ENCODE measurements at regions of chr5 and their contacts with region 1.

Region 1: GRCh38 chr5:170225326-170226128 is 7.3 kb upstream of the C5orf58 start:
- DNase-seq: peak; percentile 91
- ATAC-seq: peak; percentile 80
- H3K4me3 Mint-ChIP-seq: no peak overlapping the region
- H3K27ac Mint-ChIP-seq: no peak overlapping the region
- H3K4me1 Mint-ChIP-seq: peaks cover 5% of the 10 kb centered on the region
- H3K27me3 Mint-ChIP-seq: no peaks in the 10 kb centered on the region
- CTCF ChIP-seq: peak; percentile 74

Region 2: DNA sequence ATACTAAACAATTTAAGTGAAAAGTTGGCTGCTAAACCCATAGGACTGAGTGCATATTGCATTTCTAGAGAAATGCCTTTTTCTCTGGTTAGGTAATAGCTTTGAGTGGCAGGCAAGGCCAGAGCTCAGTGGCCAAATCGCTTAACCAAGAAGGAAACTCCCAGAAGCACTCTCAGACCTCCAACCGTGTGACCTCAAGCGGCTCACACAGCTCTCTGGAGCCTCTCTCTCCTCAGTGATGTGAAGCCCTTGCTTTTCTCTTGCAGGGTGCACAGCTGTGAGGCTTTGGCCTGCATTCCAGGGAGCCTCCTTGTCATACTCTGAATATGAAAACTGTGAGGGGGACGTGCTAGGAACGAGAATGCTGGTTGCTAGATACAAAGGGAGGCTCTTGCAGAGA is 351.9 kb before region 1 on chr5:
- CTCF ChIA-PET with region 1: no interaction called
- POLR2A ChIA-PET with region 1: no interaction called
- intact Hi-C with region 1: no loop called
- DNase-seq: no peak
- ATAC-seq: no peak
- H3K4me3 Mint-ChIP-seq: no peak overlapping the region
- H3K27ac Mint-ChIP-seq: no peak overlapping the region
- H3K4me1 Mint-ChIP-seq: peaks cover 8% of the 10 kb centered on the region
- H3K27me3 Mint-ChIP-seq: no peaks in the 10 kb centered on the region
- CTCF ChIP-seq: no peak

Region 3: GRCh38 chr5:170067152-170067551 is 158.4 kb before region 1 on chr5:
- CTCF ChIA-PET with region 1: no interaction called
- POLR2A ChIA-PET with region 1: no interaction called
- intact Hi-C with region 1: no loop called
- DNase-seq: no peak
- ATAC-seq: no peak
- H3K4me3 Mint-ChIP-seq: no peak overlapping the region
- H3K27ac Mint-ChIP-seq: peak overlapping the region; percentile 27
- H3K4me1 Mint-ChIP-seq: peaks cover 2% of the 10 kb centered on the region
- H3K27me3 Mint-ChIP-seq: no peaks in the 10 kb centered on the region
- CTCF ChIP-seq: no peak

Region 4: DNA sequence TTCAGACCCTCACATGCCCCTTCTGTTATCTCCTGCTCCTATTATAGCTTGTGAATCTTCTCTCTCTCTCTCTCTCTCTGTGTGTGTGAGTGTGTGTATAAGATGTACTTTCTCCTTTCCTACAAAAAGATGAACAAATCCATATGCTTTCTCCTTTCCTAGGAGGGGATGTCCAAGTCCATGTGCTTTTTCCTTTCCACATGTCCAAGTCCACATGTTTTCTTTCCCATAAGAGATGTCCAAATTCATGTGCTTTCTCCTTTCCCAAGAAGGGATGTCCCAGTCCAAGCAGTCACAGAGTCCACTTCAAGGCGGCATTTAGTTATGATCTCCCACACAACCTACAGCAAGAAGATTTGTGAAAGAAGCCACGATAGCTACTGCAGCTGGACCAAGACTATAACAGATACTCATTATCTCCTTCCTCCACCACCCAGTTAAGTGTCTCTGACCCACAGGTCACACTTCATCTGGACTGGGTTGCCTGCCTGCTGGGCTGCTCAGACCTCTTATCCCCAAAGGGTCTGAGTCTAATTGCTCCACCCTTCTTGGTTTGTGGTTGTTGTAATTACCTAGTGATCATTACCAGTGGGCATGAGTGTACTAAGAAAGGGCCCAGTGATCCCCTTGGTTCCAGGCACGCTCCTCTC is 138.2 kb before region 1 on chr5:
- CTCF ChIA-PET with region 1: no interaction called
- POLR2A ChIA-PET with region 1: no interaction called
- intact Hi-C with region 1: no loop called
- DNase-seq: no peak
- ATAC-seq: no peak
- H3K4me3 Mint-ChIP-seq: no peak overlapping the region
- H3K27ac Mint-ChIP-seq: no peak overlapping the region
- H3K4me1 Mint-ChIP-seq: no peaks in the 10 kb centered on the region
- H3K27me3 Mint-ChIP-seq: no peaks in the 10 kb centered on the region
- CTCF ChIP-seq: no peak

Region 5: GRCh38 chr5:170100066-170100943 is 125.2 kb before region 1 on chr5:
- CTCF ChIA-PET with region 1: interaction called, 11 read pairs
- POLR2A ChIA-PET with region 1: no interaction called
- intact Hi-C with region 1: no loop called
- DNase-seq: peak; percentile 91
- ATAC-seq: peak; percentile 77
- H3K4me3 Mint-ChIP-seq: no peak overlapping the region
- H3K27ac Mint-ChIP-seq: no peak overlapping the region
- H3K4me1 Mint-ChIP-seq: no peaks in the 10 kb centered on the region
- H3K27me3 Mint-ChIP-seq: no peaks in the 10 kb centered on the region
- CTCF ChIP-seq: peak; percentile 82

Region 6: GRCh38 chr5:170111088-170111785 is 114.3 kb before region 1 on chr5:
- CTCF ChIA-PET with region 1: no interaction called
- POLR2A ChIA-PET with region 1: no interaction called
- intact Hi-C with region 1: no loop called
- DNase-seq: no peak
- ATAC-seq: no peak
- H3K4me3 Mint-ChIP-seq: no peak overlapping the region
- H3K27ac Mint-ChIP-seq: no peak overlapping the region
- H3K4me1 Mint-ChIP-seq: no peaks in the 10 kb centered on the region
- H3K27me3 Mint-ChIP-seq: peaks cover 4% of the 10 kb centered on the region
- CTCF ChIP-seq: no peak

Region 7: DNA sequence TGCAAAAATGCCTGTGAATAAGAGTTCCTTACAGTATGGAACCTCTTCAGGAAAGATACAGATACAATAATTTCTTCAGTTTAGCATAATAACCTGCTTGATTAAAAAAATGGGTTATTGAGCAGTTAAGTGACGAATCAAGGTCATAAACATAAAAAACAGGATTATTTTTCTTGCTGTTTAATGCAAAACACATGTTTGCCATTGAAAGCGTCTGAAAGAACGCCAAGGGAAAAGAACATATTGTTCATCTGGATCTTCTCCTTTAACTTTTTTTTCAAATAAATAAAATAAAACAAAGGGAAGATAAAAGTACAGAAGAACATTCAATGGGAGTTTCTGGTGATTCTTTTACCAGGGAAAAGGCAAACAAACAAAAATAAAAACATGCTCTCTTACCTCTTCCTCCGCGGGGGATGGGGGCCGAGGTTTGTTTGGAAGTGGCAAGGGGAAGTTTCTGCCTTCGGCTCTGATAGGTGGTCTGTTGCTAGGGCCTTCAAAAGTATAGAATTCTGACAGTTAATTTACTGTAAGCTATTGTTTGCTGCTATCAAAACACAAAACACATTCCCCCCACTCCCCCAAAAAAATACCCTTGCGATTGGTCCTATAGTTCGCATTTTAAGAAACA is 27.3 kb after region 1 on chr5:
- CTCF ChIA-PET with region 1: interaction called, 20 read pairs
- POLR2A ChIA-PET with region 1: no interaction called
- intact Hi-C with region 1: no loop called
- DNase-seq: no peak
- ATAC-seq: no peak
- H3K4me3 Mint-ChIP-seq: no peak overlapping the region
- H3K27ac Mint-ChIP-seq: peak overlapping the region; percentile 74
- H3K4me1 Mint-ChIP-seq: peaks cover 86% of the 10 kb centered on the region
- H3K27me3 Mint-ChIP-seq: no peaks in the 10 kb centered on the region
- CTCF ChIP-seq: no peak

Region 8: DNA sequence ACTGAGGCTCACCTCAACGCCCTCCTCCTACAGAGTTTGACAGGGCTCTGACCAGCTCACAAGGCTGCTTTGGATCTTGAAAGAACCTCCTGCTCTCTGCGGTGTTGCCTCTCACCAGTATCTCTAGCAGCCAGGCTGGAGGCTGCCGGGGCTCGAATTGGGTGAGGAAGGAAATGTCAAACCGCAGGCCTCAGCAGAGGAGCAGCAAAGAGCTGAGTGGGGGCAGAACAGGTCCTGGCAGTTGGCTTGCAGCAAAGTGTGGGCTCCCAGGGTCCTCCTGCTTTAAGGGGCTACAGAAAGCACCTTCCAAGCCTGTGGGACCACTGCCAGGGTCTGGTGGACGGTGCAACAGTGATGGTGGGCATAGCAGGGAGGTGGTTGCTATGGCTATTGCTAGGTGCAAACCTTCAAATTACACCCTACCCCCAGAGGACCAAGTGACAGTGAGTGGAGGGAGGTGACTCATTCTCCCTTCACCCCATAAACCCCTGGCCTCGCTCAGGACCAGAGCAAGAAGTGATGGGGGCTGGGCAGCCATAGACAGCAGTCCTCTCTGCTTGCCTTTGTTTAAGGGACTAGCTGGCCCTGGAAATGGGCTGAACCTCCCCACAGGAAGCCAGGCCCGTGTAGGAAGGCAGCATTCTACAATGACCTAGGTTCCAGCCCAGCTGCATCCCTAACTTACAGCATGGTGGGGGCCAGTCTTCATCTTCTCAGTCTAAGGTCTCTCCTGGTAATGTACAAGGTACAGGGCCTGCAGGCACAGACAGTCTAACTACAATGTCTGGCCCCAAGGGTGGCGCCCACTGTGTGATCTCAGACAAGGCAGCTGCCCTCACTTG is 53.3 kb after region 1 on chr5:
- CTCF ChIA-PET with region 1: interaction called, 13 read pairs
- POLR2A ChIA-PET with region 1: no interaction called
- intact Hi-C with region 1: no loop called
- DNase-seq: peak; percentile 97
- ATAC-seq: peak; percentile 76
- H3K4me3 Mint-ChIP-seq: peak overlapping the region; percentile 43
- H3K27ac Mint-ChIP-seq: peak overlapping the region; percentile 96
- H3K4me1 Mint-ChIP-seq: peaks cover 93% of the 10 kb centered on the region
- H3K27me3 Mint-ChIP-seq: no peaks in the 10 kb centered on the region
- CTCF ChIP-seq: no peak

Region 9: GRCh38 chr5:170338933-170339779 is 113.6 kb after region 1 on chr5:
- CTCF ChIA-PET with region 1: interaction called, 228 read pairs
- POLR2A ChIA-PET with region 1: interaction called, 10 read pairs
- intact Hi-C with region 1: loop called (anchors 1 kb)
- DNase-seq: peak; percentile 79
- ATAC-seq: peak; percentile 70
- H3K4me3 Mint-ChIP-seq: no peak overlapping the region
- H3K27ac Mint-ChIP-seq: peak overlapping the region; percentile 75
- H3K4me1 Mint-ChIP-seq: peaks cover 39% of the 10 kb centered on the region
- H3K27me3 Mint-ChIP-seq: no peaks in the 10 kb centered on the region
- CTCF ChIP-seq: peak; percentile 95

Region 10: GRCh38 chr5:170638454-170639220 is 413.1 kb after region 1 on chr5:
- CTCF ChIA-PET with region 1: interaction called, 6 read pairs
- POLR2A ChIA-PET with region 1: no interaction called
- intact Hi-C with region 1: loop called (anchors 10 kb)
- DNase-seq: peak; percentile 78
- ATAC-seq: peak; percentile 74
- H3K4me3 Mint-ChIP-seq: no peak overlapping the region
- H3K27ac Mint-ChIP-seq: no peak overlapping the region
- H3K4me1 Mint-ChIP-seq: peaks cover 6% of the 10 kb centered on the region
- H3K27me3 Mint-ChIP-seq: peaks cover 9% of the 10 kb centered on the region
- CTCF ChIP-seq: peak; percentile 89

Measured in activated CD8-positive, alpha-beta T cell treated with anti-CD3 and anti-CD28 coated beads for 36 hours (primary cell).